Cardiac septum (tissue), 1 donor: ENCODE measurements at regions of chrX and their contacts with region 1.

Region 1: DNA sequence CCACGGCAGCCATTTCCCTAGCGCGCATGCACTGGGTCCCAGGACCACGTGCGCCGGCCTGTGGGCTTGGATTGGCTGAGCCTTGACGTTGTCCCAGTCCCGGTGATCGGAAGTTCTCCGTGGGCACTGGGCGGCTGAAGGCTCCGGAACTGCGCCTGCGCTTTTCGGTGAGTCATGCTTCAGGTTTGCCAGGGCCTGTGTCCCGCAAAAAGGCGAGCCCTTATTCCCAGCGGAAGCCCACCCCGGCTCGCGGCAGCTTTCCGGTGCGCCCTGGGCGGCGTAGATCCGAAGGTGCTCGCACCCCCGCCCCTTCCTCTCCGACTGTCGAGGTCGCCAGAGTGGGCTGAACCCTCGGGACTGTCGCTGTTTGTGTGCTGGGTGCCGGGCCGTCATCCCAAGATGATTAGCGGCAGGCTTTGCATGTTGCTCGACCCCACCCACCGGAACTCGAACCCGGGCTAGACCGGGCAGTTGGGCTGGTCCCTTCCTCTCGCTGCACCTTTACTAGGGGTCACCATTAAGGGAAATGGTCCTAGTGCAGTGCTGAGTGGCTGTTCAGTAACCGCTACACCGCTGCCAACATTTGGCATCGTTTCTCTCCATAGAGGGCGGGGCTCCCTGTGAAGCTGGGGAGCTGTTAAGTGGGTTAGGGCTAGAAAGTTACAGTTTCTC is at the start of gene TCEANC:
- DNase-seq: peak; percentile 98
- total RNA-seq, gene TCEANC: 6.4 TPM

Region 2: GRCh38 chrX:13688958-13689740 is 36.0 kb after region 1 on chrX and contains the start of gene RAB9A:
- intact Hi-C with region 1: loop called (anchors 5 kb)
- DNase-seq: peak; percentile 93
- total RNA-seq, gene RAB9A: 28.2 TPM

Region 3: DNA sequence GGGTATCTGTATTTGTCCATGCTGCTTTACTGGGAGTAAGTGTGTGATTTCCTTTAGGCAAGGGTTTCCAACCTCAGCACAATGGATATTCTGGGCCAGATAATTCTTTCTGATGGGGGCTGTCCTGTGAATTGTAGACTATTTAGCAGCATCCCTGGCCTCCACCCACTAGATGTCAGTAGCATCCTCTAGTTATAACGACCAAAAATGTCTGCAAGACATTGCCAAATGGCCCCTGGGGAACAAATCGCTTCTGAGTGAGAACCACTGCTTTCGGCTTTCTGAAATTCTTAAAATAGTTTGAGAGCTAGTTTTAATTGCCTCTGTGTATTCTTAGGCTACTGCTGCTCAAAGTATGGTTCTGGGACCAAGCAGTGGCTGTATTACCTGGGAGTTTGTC is 244.9 kb after region 1 on chrX:
- intact Hi-C with region 1: loop called (anchors 10 kb)
- DNase-seq: no peak

Region 4: DNA sequence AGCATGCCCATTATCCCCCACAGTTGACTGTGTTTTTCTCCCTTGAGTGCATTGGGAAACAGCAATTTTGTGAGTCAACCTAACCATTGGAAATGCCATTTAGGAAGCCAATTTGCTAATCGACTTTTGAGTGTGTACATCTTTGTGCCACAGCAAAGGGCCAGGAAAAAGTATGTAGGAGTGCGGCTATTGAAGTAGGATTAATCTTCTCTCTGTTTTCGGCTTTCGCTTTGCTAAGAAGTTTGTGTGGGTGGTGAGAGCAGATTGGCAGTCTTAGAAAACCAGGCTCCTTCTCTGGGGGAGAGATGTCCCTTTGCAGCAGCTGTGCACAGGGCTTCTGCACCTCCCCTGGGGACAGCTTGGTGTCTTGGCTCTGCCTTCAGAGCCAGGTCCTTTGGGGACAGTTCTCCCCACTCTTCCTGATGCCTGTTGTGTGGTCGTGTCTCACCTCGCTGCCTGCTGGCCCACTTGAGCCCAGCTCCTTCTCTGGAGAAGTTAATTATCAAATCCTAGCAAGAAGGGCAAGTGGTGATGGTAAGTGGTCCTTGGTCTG is 302.0 kb after region 1 on chrX:
- intact Hi-C with region 1: no loop called
- DNase-seq: no peak